HEK293 (cell line): ENCODE measurements at regions of chr6 and their contacts with region 1.

Region 1: GRCh38 chr6:134161036-134161435 is 108.6 kb upstream of the SLC2A12 start:
- H3K4me3 ChIP-seq: no peak overlapping the region
- H3K27ac ChIP-seq: no peak overlapping the region
- H3K4me1 ChIP-seq: no peaks in the 10 kb centered on the region
- CTCF ChIP-seq: no peak

Region 2: GRCh38 chr6:134145786-134146185 is 15.2 kb before region 1 on chr6:
- CTCF ChIA-PET with region 1: interaction called, 44 read pairs
- POLR2A ChIA-PET with region 1: no interaction called
- H3K4me3 ChIP-seq: no peak overlapping the region
- H3K27ac ChIP-seq: no peak overlapping the region
- H3K4me1 ChIP-seq: no peaks in the 10 kb centered on the region
- CTCF ChIP-seq: no peak